ENCODE measurements at regions of chr16 and their contacts with region 1.

Region 1: GRCh38 chr16:22898874-22899348 is 84.9 kb downstream of the HS3ST2 start:
- DNase-seq: peak; percentile 73
- H3K4me3 ChIP-seq: peak overlapping the region in 1 of 2 experiments; percentile 34; a peak in 1 of 4 replicates
- H3K27ac ChIP-seq: no peak overlapping the region
- H3K4me1 ChIP-seq: peaks cover 0 to 4% of the 10 kb centered on the region in 2 experiments; a peak in 1 of 4 replicates
- H3K27me3 ChIP-seq: no peaks in the 10 kb centered on the region
- CTCF ChIP-seq: peak; percentile 86
- EP300 ChIP-seq: no peak
- RAD21 ChIP-seq: peak; percentile 94

Region 2: GRCh38 chr16:22868593-22869224 is 30.2 kb before region 1 on chr16:
- CTCF ChIA-PET with region 1: interaction called, 29 read pairs
- POLR2A ChIA-PET with region 1: no interaction called
- DNase-seq: peak; percentile 33
- H3K4me3 ChIP-seq: no peak overlapping the region
- H3K27ac ChIP-seq: peak overlapping the region in 1 of 2 experiments; percentile 73; a peak in 2 of 4 replicates
- H3K4me1 ChIP-seq: peaks cover 0 to 13% of the 10 kb centered on the region in 2 experiments; a peak in 1 of 4 replicates
- H3K27me3 ChIP-seq: no peaks in the 10 kb centered on the region
- CTCF ChIP-seq: no peak
- EP300 ChIP-seq: peak in 1 of 2 experiments; percentile 56; a peak in 1 of 4 replicates
- RAD21 ChIP-seq: no peak; the same call in 1 of the 2 replicates

Region 3: GRCh38 chr16:22912654-22913053 is 13.7 kb after region 1 on chr16:
- CTCF ChIA-PET with region 1: interaction called, 77 read pairs
- POLR2A ChIA-PET with region 1: no interaction called
- DNase-seq: no peak
- H3K4me3 ChIP-seq: no peak overlapping the region
- H3K27ac ChIP-seq: no peak overlapping the region
- H3K4me1 ChIP-seq: no peaks in the 10 kb centered on the region
- H3K27me3 ChIP-seq: no peaks in the 10 kb centered on the region
- CTCF ChIP-seq: no peak
- EP300 ChIP-seq: no peak
- RAD21 ChIP-seq: no peak

Region 4: DNA sequence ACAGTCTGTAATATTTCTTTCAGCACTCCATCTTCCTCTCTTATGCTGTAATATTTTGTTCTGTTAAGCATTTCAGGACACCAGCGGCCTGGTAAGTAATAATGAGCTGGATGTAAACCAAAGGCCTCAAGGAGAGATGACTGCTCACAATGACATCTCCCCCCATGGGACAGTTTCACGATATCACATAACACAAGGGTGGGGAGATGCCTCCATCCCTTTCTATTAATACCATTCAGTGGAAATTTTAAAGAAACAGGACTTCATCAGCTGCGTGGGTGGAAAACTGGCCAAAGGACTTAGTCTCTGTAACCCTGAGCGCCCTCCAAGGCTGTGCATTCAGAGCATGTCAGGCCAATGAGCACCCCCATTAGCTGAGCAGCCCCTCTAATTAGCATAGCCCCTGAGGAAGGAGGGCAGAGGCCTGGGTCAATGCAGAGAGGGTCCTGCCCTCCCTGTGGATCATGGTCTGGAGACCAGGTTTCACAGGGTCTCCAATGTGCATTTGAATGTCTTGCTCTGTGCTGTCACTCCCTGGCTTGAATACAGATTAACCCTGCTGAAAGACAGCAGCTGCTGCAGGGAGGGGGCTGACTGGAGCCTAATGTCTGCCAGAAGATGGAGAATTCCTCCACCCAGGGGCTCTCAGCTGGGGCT is 71.4 kb after region 1 on chr16:
- CTCF ChIA-PET with region 1: interaction called, 165 read pairs
- POLR2A ChIA-PET with region 1: interaction called, 4 read pairs
- DNase-seq: no peak
- H3K4me3 ChIP-seq: no peak overlapping the region
- H3K27ac ChIP-seq: no peak overlapping the region
- H3K4me1 ChIP-seq: peaks cover 0 to 34% of the 10 kb centered on the region in 2 experiments; a peak in 2 of 4 replicates
- H3K27me3 ChIP-seq: no peaks in the 10 kb centered on the region
- CTCF ChIP-seq: no peak
- EP300 ChIP-seq: no peak
- RAD21 ChIP-seq: no peak

Region 5: GRCh38 chr16:23026784-23027362 is 128.0 kb after region 1 on chr16:
- CTCF ChIA-PET with region 1: interaction called, 12 read pairs
- POLR2A ChIA-PET with region 1: no interaction called
- DNase-seq: no peak
- H3K4me3 ChIP-seq: no peak overlapping the region
- H3K27ac ChIP-seq: no peak overlapping the region
- H3K4me1 ChIP-seq: peaks cover 0 to 32% of the 10 kb centered on the region in 2 experiments; a peak in 1 of 4 replicates
- H3K27me3 ChIP-seq: no peaks in the 10 kb centered on the region
- CTCF ChIP-seq: no peak
- EP300 ChIP-seq: no peak
- RAD21 ChIP-seq: no peak

Region 6: DNA sequence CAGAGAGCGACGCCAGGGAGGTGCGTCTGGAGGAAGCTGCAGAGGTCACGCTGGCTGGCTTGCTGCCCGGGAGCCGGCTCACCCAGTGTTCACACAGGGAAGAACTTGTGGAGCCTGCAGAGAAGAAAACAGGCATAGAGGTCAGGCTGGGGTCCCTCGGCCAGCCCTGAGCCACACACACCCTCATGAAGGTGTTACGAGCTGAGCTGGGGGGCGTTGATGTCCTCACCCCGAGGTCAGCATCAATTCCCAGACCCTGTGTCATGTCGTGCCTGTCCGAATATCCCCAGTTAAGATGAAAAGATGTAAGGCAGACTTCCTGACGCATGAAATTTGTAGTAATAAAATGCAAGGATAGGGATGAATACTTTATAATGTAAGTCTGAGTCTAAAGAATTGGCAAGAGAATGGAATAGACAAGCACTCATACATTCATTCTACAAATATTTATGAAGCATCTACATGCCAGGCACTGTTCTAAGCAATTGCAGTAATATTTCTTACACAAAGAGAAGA is 173.2 kb after region 1 on chr16:
- CTCF ChIA-PET with region 1: interaction called, 27 read pairs
- POLR2A ChIA-PET with region 1: no interaction called
- DNase-seq: peak; percentile 71
- H3K4me3 ChIP-seq: peak overlapping the region in 1 of 2 experiments; percentile 46; a peak in 3 of 4 replicates
- H3K27ac ChIP-seq: peak overlapping the region; percentile 79 to 91
- H3K4me1 ChIP-seq: peaks cover 21 to 28% of the 10 kb centered on the region in 2 experiments
- H3K27me3 ChIP-seq: no peaks in the 10 kb centered on the region
- CTCF ChIP-seq: no peak
- EP300 ChIP-seq: no peak; a peak in 1 of 4 replicates
- RAD21 ChIP-seq: no peak

Region 7: DNA sequence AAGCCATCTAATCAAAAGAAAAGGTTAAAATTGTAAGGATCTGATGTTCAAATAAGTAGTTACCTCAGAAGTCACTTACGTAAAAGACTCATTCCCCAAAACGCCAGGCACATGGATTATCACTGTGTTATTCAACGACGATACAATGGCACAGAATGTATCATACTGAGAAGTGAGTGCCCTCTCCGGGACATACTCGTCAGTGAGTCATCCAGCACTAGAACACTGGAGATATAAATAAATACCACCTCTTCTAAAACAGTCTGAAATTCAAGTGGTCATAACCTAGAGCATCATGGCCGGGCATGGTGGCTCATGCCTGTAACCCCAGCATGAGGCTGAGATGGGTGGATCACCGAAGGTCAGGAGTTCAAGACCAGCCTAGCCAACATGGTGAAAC is 225.4 kb after region 1 on chr16:
- CTCF ChIA-PET with region 1: no interaction called
- POLR2A ChIA-PET with region 1: no interaction called
- DNase-seq: no peak
- H3K4me3 ChIP-seq: no peak overlapping the region
- H3K27ac ChIP-seq: peak overlapping the region in 1 of 2 experiments; percentile 66; a peak in 2 of 4 replicates
- H3K4me1 ChIP-seq: peaks cover 6 to 23% of the 10 kb centered on the region in 2 experiments; a peak in 2 of 4 replicates
- H3K27me3 ChIP-seq: no peaks in the 10 kb centered on the region
- CTCF ChIP-seq: no peak
- EP300 ChIP-seq: no peak
- RAD21 ChIP-seq: no peak

Region 8: GRCh38 chr16:23807028-23807427 is 908.1 kb after region 1 on chr16:
- CTCF ChIA-PET with region 1: no interaction called
- POLR2A ChIA-PET with region 1: no interaction called
- DNase-seq: no peak
- H3K4me3 ChIP-seq: no peak overlapping the region
- H3K27ac ChIP-seq: no peak overlapping the region
- H3K4me1 ChIP-seq: peaks cover 0 to 5% of the 10 kb centered on the region in 2 experiments; a peak in 1 of 4 replicates
- H3K27me3 ChIP-seq: no peaks in the 10 kb centered on the region
- CTCF ChIP-seq: no peak
- EP300 ChIP-seq: no peak
- RAD21 ChIP-seq: no peak

Measured in SK-N-SH (cell line).